Heart right ventricle (tissue), 16 donors: ENCODE measurements at regions of chr2 and their contacts with region 1.

Region 1: DNA sequence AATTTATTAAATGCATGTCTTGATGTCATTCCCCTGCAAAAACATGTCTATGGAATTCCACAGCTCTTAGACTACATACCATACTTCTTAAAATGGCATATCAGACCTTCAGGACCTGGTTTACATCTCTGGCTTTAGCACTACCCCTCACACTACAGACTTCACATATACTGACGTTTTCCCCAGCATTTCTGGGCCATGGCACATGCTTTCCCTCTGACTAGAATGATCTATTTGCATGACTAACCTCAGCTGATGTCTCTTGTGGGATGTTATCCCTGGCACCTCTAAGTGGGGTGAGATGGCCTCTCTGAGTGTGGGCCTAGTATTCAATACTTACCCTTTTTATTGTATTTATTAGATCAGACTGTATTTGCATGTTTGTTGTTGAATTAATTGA is 381.6 kb downstream of the ERBB4 start:
- DNase-seq: no peak
- ATAC-seq: no peak
- H3K4me3 ChIP-seq: no peak overlapping the region
- H3K27ac ChIP-seq: no peak overlapping the region
- H3K4me1 ChIP-seq: peaks cover 0 to 6% (median 0%) of the 10 kb centered on the region in 9 donors
- H3K27me3 ChIP-seq: no peaks in the 10 kb centered on the region
- CTCF ChIP-seq: no peak

Region 2: GRCh38 chr2:212124599-212124998 is 32.4 kb before region 1 on chr2:
- intact Hi-C with region 1: no loop called
- DNase-seq: no peak
- ATAC-seq: peak in 3 of 8 donors; percentile 42 to 74 (median 70)
- H3K4me3 ChIP-seq: peak overlapping the region in 2 of 10 donors; percentile 6 to 8
- H3K27ac ChIP-seq: no peak overlapping the region
- H3K4me1 ChIP-seq: no peaks in the 10 kb centered on the region
- H3K27me3 ChIP-seq: no peaks in the 10 kb centered on the region
- CTCF ChIP-seq: no peak

Region 3: GRCh38 chr2:212520340-212520739 is 363.3 kb after region 1 on chr2:
- intact Hi-C with region 1: loop called in 1 of 10 experiments (anchors 10 kb)
- DNase-seq: no peak
- ATAC-seq: no peak
- H3K4me3 ChIP-seq: no peak overlapping the region
- H3K27ac ChIP-seq: no peak overlapping the region
- H3K4me1 ChIP-seq: peaks cover 0 to 22% (median 0%) of the 10 kb centered on the region in 9 donors
- H3K27me3 ChIP-seq: no peaks in the 10 kb centered on the region
- CTCF ChIP-seq: peak in 4 of 9 donors; percentile 22 to 41 (median 28)